Mammary epithelial cell (primary cell): ENCODE measurements at regions of chr12 and their contacts with region 1.

Region 1: GRCh38 chr12:103647267-103647666 is 60.2 kb downstream of the STAB2 start:
- DNase-seq: peak; percentile 99
- H3K4me3 ChIP-seq: no peak overlapping the region
- H3K27ac ChIP-seq: peak overlapping the region; percentile 71
- H3K4me1 ChIP-seq: peaks cover 18% of the 10 kb centered on the region
- H3K27me3 ChIP-seq: no peaks in the 10 kb centered on the region
- CTCF ChIP-seq: no peak

Region 2: GRCh38 chr12:103334466-103334865 is 312.8 kb before region 1 on chr12:
- CTCF ChIA-PET with region 1: no interaction called
- dilution Hi-C with region 1: no loop called
- in situ Hi-C with region 1: no loop called
- intact Hi-C with region 1: no loop called
- DNase-seq: no peak
- H3K4me3 ChIP-seq: no peak overlapping the region
- H3K27ac ChIP-seq: no peak overlapping the region
- H3K4me1 ChIP-seq: no peaks in the 10 kb centered on the region
- H3K27me3 ChIP-seq: no peaks in the 10 kb centered on the region
- CTCF ChIP-seq: no peak

Region 3: GRCh38 chr12:103751171-103751570 is 103.9 kb after region 1 on chr12:
- CTCF ChIA-PET with region 1: no interaction called
- dilution Hi-C with region 1: no loop called
- in situ Hi-C with region 1: no loop called
- intact Hi-C with region 1: loop called (anchors 10 kb)
- DNase-seq: no peak
- H3K4me3 ChIP-seq: no peak overlapping the region
- H3K27ac ChIP-seq: no peak overlapping the region
- H3K4me1 ChIP-seq: peaks cover 6% of the 10 kb centered on the region
- H3K27me3 ChIP-seq: no peaks in the 10 kb centered on the region
- CTCF ChIP-seq: peak in 1 of 2 donors; percentile 13